Activated T-helper 2 cell treated with anti-CD3 and anti-CD28 coated beads, Interferon-gamma antibody, Interleukin-2, Interleukin-4, amounts not matched to agents 10 μg/mL and 5 μg/mL and 100 μg/mL, durations not matched to agents 14 hours and 24 hours and 36 hours (primary cell): ENCODE measurements at regions of chr5 and their contacts with region 1.

Region 1: DNA sequence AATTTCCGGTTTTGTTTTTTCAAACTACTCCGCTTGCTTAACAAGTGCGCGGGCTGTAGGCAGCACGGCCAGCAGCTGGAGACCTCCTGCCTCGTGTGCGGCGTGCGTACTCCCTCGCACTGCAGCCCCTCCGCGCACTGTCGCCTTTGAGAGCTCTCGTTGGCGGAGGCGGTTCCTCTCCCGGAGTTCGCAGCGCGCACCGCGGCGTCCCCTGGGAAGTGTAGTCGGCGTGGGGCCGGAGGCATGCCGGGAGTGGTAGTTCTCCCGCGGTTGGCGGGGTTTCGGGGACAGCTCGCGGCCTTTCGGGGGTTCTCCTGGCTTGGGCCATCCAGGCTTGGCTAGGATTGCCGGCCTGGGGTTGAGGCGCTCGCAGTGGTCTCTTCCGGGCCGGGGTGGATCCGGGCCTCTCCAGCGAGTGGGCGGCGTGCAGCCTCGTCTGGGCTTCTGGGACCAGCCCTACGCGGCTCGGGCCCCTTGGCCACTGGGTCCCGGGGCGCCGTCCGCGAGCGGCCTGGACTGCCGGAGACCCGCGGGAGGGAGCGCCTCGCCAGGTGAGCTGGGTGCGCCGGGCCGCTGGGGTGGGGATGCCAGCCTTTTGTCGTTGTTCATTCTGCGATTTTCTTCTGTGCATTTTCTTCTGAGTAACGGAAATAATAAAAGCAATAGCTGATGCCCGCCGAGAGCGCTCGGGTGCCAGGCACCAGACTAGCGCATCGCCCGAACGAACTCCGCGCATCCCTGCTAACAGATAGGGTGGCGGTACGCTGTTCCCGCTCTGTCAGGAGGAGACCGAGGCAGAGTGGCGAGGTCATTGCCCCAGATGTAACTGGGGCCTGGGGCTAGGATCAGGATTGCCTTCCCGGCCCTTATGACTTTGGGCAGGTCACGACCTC is at the start of gene ZNF354C:
- DNase-seq: peak; percentile 75
- H3K4me3 Mint-ChIP-seq: peak within 1 kb of the TSS; percentile 82
- H3K27ac Mint-ChIP-seq: peak within 1 kb of the TSS; percentile 63
- H3K4me1 Mint-ChIP-seq: peaks cover 6% of the 10 kb centered on the region
- H3K27me3 Mint-ChIP-seq: no peaks in the 10 kb centered on the region
- total RNA-seq, gene ZNF354C: 3.4 and 3.5 TPM in 2 replicates

Region 2: GRCh38 chr5:178732281-178732680 is 328.1 kb before region 1 on chr5:
- intact Hi-C with region 1: loop called (anchors 1 kb)
- DNase-seq: no peak
- H3K4me3 Mint-ChIP-seq: no peak overlapping the region
- H3K27ac Mint-ChIP-seq: no peak overlapping the region
- H3K4me1 Mint-ChIP-seq: peaks cover 4% of the 10 kb centered on the region
- H3K27me3 Mint-ChIP-seq: no peaks in the 10 kb centered on the region

Region 3: GRCh38 chr5:178859625-178860531 is 200.5 kb before region 1 on chr5 and contains the start of gene ZNF354B:
- intact Hi-C with region 1: loop called (anchors 1 kb)
- DNase-seq: peak; percentile 78
- H3K4me3 Mint-ChIP-seq: peak within 1 kb of the TSS; percentile 85
- H3K27ac Mint-ChIP-seq: peak within 1 kb of the TSS; percentile 64
- H3K4me1 Mint-ChIP-seq: peaks cover 18% of the 10 kb centered on the region
- H3K27me3 Mint-ChIP-seq: no peaks in the 10 kb centered on the region
- total RNA-seq, gene ZNF354B: 13.8 and 16.4 TPM in 2 replicates

Region 4: DNA sequence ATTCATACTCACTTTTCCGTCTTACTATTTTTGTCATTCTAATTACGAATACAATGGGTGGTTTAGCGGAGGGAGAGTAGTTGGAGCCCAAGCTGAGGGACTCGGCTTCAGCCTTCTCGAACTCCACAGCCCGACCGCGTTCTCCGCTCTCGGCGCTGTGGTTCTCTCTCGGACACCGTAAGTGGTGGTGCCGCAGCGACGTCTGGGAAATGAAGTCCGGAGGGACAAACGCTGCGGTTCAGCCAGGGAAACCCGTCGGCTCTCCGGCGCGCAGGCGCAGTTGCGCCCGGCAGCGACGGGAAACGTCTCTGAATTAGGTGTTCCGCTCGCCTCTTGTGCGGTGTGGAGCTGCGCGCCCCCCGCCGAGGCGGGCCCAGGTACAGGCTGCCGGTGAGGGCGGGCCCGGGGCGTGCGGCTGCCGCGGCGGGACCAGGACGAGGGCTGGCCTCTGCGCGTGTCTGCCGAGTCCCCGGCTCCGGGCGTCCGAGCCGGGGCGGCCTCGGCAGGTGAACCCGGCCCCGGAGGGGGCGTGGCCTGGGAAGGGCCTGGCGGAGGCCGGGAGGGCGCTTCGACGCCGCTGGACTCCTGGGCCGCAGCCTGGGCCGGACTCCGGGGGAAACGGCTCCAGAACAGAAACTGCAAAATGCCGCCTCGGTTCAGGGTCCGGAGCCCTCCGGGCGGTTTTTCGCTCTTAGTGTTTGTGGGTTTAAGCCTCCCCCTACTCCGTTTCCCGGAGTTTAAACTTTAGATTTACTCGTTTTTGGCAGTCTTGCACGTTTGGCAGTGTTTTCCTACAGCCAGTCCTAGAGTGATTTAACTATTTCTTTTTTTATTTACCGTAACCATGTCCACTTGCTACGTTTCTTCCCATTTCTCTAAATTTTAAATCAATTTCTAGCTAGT is 36.6 kb before region 1 on chr5 and contains the start of gene ZNF879:
- intact Hi-C with region 1: loop called (anchors 1 kb)
- DNase-seq: peak; percentile 90
- H3K4me3 Mint-ChIP-seq: peak within 1 kb of the TSS; percentile 91
- H3K27ac Mint-ChIP-seq: peak within 1 kb of the TSS; percentile 74
- H3K4me1 Mint-ChIP-seq: peaks cover 5% of the 10 kb centered on the region
- H3K27me3 Mint-ChIP-seq: peaks cover 3% of the 10 kb centered on the region
- total RNA-seq, gene ZNF879: 1.9 and 2.3 TPM in 2 replicates

Region 5: GRCh38 chr5:179142434-179143198 is 82.3 kb after region 1 on chr5:
- intact Hi-C with region 1: loop called (anchors 2 kb)
- DNase-seq: no peak
- H3K4me3 Mint-ChIP-seq: no peak overlapping the region
- H3K27ac Mint-ChIP-seq: peak overlapping the region; percentile 74
- H3K4me1 Mint-ChIP-seq: peaks cover 14% of the 10 kb centered on the region
- H3K27me3 Mint-ChIP-seq: no peaks in the 10 kb centered on the region